CD4-positive, alpha-beta T cell (primary cell): ENCODE measurements at regions of chr1 and their contacts with region 1.

Region 1: DNA sequence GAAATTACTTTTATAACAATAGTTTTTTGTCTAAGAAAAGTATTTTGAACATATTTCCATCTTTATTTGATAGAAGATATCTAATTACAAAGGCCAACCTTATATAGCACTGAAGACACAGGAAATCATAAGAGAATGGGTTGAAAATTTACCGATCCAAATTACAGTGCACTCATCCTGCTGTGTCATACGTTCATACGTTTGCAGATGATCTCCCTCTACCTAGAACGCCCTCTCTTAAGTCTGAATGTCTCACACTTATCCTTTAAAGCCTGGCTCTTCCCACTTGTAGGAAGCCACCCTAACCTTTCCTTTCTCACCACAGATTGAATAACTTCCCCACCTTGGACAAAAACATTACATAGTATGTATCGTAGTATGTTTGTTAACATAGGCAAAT is 9.3 kb downstream of the ASH1L start:
- DNase-seq: no peak
- ATAC-seq: peak; percentile 63
- H3K4me3 ChIP-seq: no peak overlapping the region
- H3K4me3 Mint-ChIP-seq: peak overlapping the region; percentile 9
- H3K27ac ChIP-seq: no peak overlapping the region
- H3K27ac Mint-ChIP-seq: peak overlapping the region; percentile 52
- H3K4me1 ChIP-seq: peaks cover 33% of the 10 kb centered on the region
- H3K4me1 Mint-ChIP-seq: peaks cover 49% of the 10 kb centered on the region
- H3K27me3 ChIP-seq: no peaks in the 10 kb centered on the region
- H3K27me3 Mint-ChIP-seq: no peaks in the 10 kb centered on the region
- CTCF ChIP-seq: no peak

Region 2: GRCh38 chr1:155504207-155504606 is 49.1 kb before region 1 on chr1:
- CTCF ChIA-PET with region 1: no interaction called
- POLR2A ChIA-PET with region 1: no interaction called
- intact Hi-C with region 1: loop called in 1 of 2 experiments (anchors 10 kb)
- DNase-seq: peak in 3 of 14 experiments; percentile 43 to 56 (median 56)
- ATAC-seq: peak; percentile 70
- H3K4me3 ChIP-seq: no peak overlapping the region
- H3K4me3 Mint-ChIP-seq: no peak overlapping the region
- H3K27ac ChIP-seq: no peak overlapping the region
- H3K27ac Mint-ChIP-seq: peak overlapping the region; percentile 6
- H3K4me1 ChIP-seq: peaks cover 16% of the 10 kb centered on the region
- H3K4me1 Mint-ChIP-seq: peaks cover 49% of the 10 kb centered on the region
- H3K27me3 ChIP-seq: no peaks in the 10 kb centered on the region
- H3K27me3 Mint-ChIP-seq: no peaks in the 10 kb centered on the region
- CTCF ChIP-seq: no peak

Region 3: DNA sequence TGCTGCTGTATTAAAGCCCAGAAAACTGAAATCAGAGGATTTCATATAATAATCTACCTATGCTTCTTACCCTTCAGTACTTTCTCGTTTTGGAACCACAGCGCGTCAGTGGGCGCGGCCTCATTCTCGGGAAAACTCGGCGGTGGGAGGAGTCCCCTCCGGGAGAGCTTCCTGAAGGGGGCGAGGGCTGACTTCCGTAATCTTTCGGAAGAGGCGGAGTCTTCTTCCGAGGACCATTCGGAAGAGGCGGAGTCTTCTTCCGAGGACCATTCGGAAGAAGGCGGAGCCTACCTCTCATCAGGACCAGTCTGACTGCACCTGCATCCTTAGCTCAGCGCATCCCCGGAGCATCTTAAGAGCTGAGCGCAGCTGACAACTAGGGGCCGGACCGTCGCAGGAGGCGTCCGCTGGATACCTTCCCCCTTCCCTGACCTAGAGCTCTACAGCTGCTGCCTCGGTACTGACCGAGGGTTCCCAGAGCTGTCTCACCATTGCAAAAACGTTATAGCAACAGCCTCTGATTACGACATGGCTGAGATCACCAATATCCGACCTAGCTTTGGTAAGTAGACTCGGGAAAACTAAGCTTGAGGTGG is 306.0 kb after region 1 on chr1 and contains the start of gene SYT11:
- CTCF ChIA-PET with region 1: no interaction called
- POLR2A ChIA-PET with region 1: no interaction called
- intact Hi-C with region 1: no loop called
- DNase-seq: peak; percentile 83 to 97 (median 92)
- ATAC-seq: peak; percentile 89
- H3K4me3 ChIP-seq: peak within 1 kb of the TSS; percentile 62
- H3K4me3 Mint-ChIP-seq: peak within 1 kb of the TSS; percentile 93
- H3K27ac ChIP-seq: peak within 1 kb of the TSS; percentile 42 to 81
- H3K27ac Mint-ChIP-seq: peak within 1 kb of the TSS; percentile 81
- H3K4me1 ChIP-seq: peaks cover 38% of the 10 kb centered on the region
- H3K4me1 Mint-ChIP-seq: peaks cover 33% of the 10 kb centered on the region
- H3K27me3 ChIP-seq: peaks cover 0 to 8% of the 10 kb centered on the region in 2 experiments
- H3K27me3 Mint-ChIP-seq: peaks cover 25% of the 10 kb centered on the region
- CTCF ChIP-seq: no peak
- total RNA-seq, gene SYT11: 6.1 to 6.3 TPM

Region 4: DNA sequence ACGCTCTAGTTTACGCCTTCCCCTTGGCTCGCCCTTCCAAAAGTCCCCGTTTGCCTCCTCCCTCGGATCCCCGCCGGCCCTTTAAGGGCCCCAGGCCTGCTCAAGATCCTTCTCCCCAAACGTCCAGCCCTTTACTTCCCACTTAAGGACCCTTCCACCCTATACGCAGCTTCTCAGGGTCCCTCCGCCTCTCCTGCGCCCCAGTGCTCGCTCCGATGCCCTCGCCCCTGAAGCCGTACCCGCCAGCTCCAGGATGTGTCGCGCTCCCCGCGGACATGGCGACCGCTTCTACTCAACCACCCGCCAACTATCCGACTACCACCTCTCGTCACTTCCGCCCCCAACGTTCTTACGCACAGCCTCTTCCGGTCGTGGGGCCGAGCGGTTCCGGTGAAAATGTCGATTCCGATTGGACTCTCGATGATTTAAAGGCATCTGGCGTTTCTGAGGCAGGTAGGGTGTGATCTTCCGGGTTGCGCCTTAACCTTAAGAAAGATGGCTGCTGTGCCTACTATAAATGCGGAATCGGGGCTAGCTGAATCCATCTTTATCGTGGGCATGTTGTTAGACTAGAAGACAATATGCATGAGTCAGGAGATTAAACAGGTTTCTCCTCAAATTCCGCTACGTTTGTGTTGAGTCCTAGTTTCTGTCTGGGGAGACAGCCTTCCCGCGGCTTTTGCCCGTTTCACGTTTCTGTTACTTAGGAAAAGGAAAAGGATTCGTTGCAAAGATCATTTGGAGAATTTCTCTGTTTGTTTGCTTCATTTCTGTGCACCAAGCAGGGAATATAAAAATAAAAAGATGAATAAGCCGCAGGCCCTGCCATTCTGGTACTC is 381.0 kb after region 1 on chr1 and contains the start of gene KHDC4:
- CTCF ChIA-PET with region 1: no interaction called
- POLR2A ChIA-PET with region 1: no interaction called
- intact Hi-C with region 1: no loop called
- DNase-seq: peak; percentile 88 to 99 (median 93)
- ATAC-seq: peak; percentile 93
- H3K4me3 ChIP-seq: peak within 1 kb of the TSS; percentile 82
- H3K4me3 Mint-ChIP-seq: no peak within 1 kb of the TSS
- H3K27ac ChIP-seq: peak within 1 kb of the TSS; percentile 86 to 95
- H3K27ac Mint-ChIP-seq: no peak within 1 kb of the TSS
- H3K4me1 ChIP-seq: peaks cover 42% of the 10 kb centered on the region
- H3K4me1 Mint-ChIP-seq: peaks cover 38% of the 10 kb centered on the region
- H3K27me3 ChIP-seq: no peaks in the 10 kb centered on the region
- H3K27me3 Mint-ChIP-seq: no peaks in the 10 kb centered on the region
- CTCF ChIP-seq: no peak
- total RNA-seq, gene KHDC4: 56.6 to 60.8 TPM